ENCODE measurements at regions of chr15 and their contacts with region 1.

Region 1: GRCh38 chr15:58980351-58980939 is 7.0 kb upstream of the RNF111 start:
- DNase-seq: peak in 3 of 14 experiments; percentile 66 to 72 (median 70)
- ATAC-seq: peak; percentile 50
- H3K4me3 ChIP-seq: no peak overlapping the region
- H3K4me3 Mint-ChIP-seq: no peak overlapping the region
- H3K27ac ChIP-seq: no peak overlapping the region
- H3K27ac Mint-ChIP-seq: no peak overlapping the region
- H3K4me1 ChIP-seq: peaks cover 18% of the 10 kb centered on the region
- H3K4me1 Mint-ChIP-seq: peaks cover 32% of the 10 kb centered on the region
- H3K27me3 ChIP-seq: no peaks in the 10 kb centered on the region
- H3K27me3 Mint-ChIP-seq: no peaks in the 10 kb centered on the region
- CTCF ChIP-seq: peak; percentile 78

Region 2: GRCh38 chr15:59138243-59138642 is 157.8 kb after region 1 on chr15:
- CTCF ChIA-PET with region 1: no interaction called
- POLR2A ChIA-PET with region 1: no interaction called
- intact Hi-C with region 1: loop called (anchors 2 to 10 kb)
- DNase-seq: peak; percentile 30 to 79 (median 51)
- ATAC-seq: peak; percentile 92
- H3K4me3 ChIP-seq: no peak overlapping the region
- H3K4me3 Mint-ChIP-seq: no peak overlapping the region
- H3K27ac ChIP-seq: no peak overlapping the region
- H3K27ac Mint-ChIP-seq: no peak overlapping the region
- H3K4me1 ChIP-seq: peaks cover 6% of the 10 kb centered on the region
- H3K4me1 Mint-ChIP-seq: peaks cover 8% of the 10 kb centered on the region
- H3K27me3 ChIP-seq: no peaks in the 10 kb centered on the region
- H3K27me3 Mint-ChIP-seq: no peaks in the 10 kb centered on the region
- CTCF ChIP-seq: peak; percentile 58

Region 3: GRCh38 chr15:59217876-59218498 is 237.5 kb after region 1 on chr15:
- CTCF ChIA-PET with region 1: no interaction called
- POLR2A ChIA-PET with region 1: no interaction called
- intact Hi-C with region 1: no loop called
- DNase-seq: no peak
- ATAC-seq: no peak
- H3K4me3 ChIP-seq: no peak overlapping the region
- H3K4me3 Mint-ChIP-seq: no peak overlapping the region
- H3K27ac ChIP-seq: no peak overlapping the region
- H3K27ac Mint-ChIP-seq: no peak overlapping the region
- H3K4me1 ChIP-seq: no peaks in the 10 kb centered on the region
- H3K4me1 Mint-ChIP-seq: no peaks in the 10 kb centered on the region
- H3K27me3 ChIP-seq: no peaks in the 10 kb centered on the region
- H3K27me3 Mint-ChIP-seq: peaks cover 10% of the 10 kb centered on the region
- CTCF ChIP-seq: no peak

Region 4: GRCh38 chr15:59247364-59247763 is 266.9 kb after region 1 on chr15:
- CTCF ChIA-PET with region 1: no interaction called
- POLR2A ChIA-PET with region 1: no interaction called
- intact Hi-C with region 1: loop called (anchors 5 to 10 kb)
- DNase-seq: peak in 13 of 14 experiments; percentile 8 to 69 (median 27)
- ATAC-seq: peak; percentile 58
- H3K4me3 ChIP-seq: no peak overlapping the region
- H3K4me3 Mint-ChIP-seq: no peak overlapping the region
- H3K27ac ChIP-seq: no peak overlapping the region
- H3K27ac Mint-ChIP-seq: no peak overlapping the region
- H3K4me1 ChIP-seq: peaks cover 2% of the 10 kb centered on the region
- H3K4me1 Mint-ChIP-seq: no peaks in the 10 kb centered on the region
- H3K27me3 ChIP-seq: no peaks in the 10 kb centered on the region
- H3K27me3 Mint-ChIP-seq: no peaks in the 10 kb centered on the region
- CTCF ChIP-seq: peak; percentile 37

Region 5: DNA sequence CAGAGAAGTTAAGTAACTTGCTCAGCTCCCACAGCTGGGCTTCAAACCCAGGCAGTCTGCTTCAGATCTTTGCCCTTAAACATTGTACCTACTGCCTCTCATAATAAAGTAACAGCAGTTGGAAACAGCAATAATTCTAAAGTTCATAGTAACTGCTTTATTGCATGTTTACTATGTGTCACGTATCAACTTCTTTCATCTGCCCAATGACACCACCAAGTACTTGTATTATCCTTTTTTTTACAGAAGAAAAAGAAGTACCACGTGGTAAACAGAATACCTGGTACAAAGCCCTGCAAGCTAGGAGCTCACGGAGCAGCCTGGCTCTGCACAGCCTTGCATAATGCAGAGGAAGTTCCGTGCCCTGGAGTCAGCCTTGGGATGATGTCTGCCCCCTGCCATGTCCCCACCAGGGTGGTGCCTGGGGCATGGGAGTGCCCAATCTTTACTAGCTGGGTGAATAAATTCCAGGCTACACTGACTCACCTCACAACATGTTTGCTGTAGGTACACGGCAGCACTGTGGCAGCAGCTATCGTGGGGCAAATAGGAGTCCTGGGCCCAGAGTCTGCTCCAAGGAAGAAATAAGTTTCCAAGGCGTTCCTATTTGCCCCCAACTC is 303.4 kb after region 1 on chr15:
- CTCF ChIA-PET with region 1: no interaction called
- POLR2A ChIA-PET with region 1: no interaction called
- intact Hi-C with region 1: no loop called
- DNase-seq: no peak
- ATAC-seq: no peak
- H3K4me3 ChIP-seq: no peak overlapping the region
- H3K4me3 Mint-ChIP-seq: no peak overlapping the region
- H3K27ac ChIP-seq: no peak overlapping the region
- H3K27ac Mint-ChIP-seq: no peak overlapping the region
- H3K4me1 ChIP-seq: no peaks in the 10 kb centered on the region
- H3K4me1 Mint-ChIP-seq: no peaks in the 10 kb centered on the region
- H3K27me3 ChIP-seq: no peaks in the 10 kb centered on the region
- H3K27me3 Mint-ChIP-seq: peaks cover 6% of the 10 kb centered on the region
- CTCF ChIP-seq: no peak

Measured in CD4-positive, alpha-beta T cell (primary cell).